PC-3 (cell line): ENCODE measurements at regions of chr7 and their contacts with region 1.

Region 1: DNA sequence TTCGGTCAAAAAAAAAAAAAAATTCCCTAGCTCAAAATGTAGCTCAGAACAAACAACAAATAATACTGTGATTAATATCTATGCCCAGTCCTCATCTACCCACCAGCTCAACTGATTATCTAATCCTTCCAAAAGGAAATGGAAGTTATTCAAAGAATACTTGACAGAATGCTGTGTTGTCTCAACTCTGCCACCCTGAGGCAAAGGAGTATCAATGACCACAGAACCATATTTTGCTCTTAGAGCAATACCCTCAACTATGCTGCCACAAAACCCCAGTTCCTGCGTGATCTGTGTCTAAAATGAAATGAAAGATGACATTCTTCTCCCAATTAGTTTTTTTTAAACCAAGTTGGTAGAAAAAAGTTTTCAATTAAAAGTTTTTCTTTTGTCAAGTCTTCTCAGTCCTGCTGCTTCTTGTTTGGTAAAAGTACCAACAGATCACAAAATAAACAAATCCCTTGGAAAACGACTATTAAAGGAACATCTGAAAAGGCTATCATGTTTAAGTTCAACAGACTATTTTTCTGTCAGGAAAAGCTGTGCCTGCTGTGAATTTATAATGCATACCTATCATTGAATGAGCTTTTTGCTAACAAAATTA is 21.6 kb downstream of the RBM28 start:
- DNase-seq: peak; percentile 53
- ATAC-seq: peak; percentile 92
- H3K4me3 ChIP-seq: no peak overlapping the region
- H3K27ac ChIP-seq: no peak overlapping the region
- H3K4me1 ChIP-seq: no peaks in the 10 kb centered on the region
- H3K27me3 ChIP-seq: no peaks in the 10 kb centered on the region
- CTCF ChIP-seq: peak; percentile 58

Region 2: GRCh38 chr7:128135515-128136214 is 186.5 kb before region 1 on chr7:
- CTCF ChIA-PET with region 1: no interaction called
- POLR2A ChIA-PET with region 1: no interaction called
- intact Hi-C with region 1: loop called (anchors 2 kb)
- DNase-seq: peak; percentile 51
- ATAC-seq: peak; percentile 90
- H3K4me3 ChIP-seq: peak overlapping the region; percentile 70
- H3K27ac ChIP-seq: no peak overlapping the region
- H3K4me1 ChIP-seq: peaks cover 6% of the 10 kb centered on the region
- H3K27me3 ChIP-seq: peaks cover 26% of the 10 kb centered on the region
- CTCF ChIP-seq: peak; percentile 70; the same call in 1 of the 2 replicates